ENCODE measurements at regions of chr2 and their contacts with region 1.

Region 1: GRCh38 chr2:204950671-204951346 is 405.5 kb downstream of the PARD3B start:
- DNase-seq: no peak
- H3K4me3 Mint-ChIP-seq: no peak overlapping the region
- H3K27ac Mint-ChIP-seq: no peak overlapping the region
- H3K4me1 Mint-ChIP-seq: peaks cover 57% of the 10 kb centered on the region
- H3K27me3 Mint-ChIP-seq: no peaks in the 10 kb centered on the region

Region 2: GRCh38 chr2:204892506-204893255 is 58.1 kb before region 1 on chr2:
- intact Hi-C with region 1: loop called (anchors 2 kb)
- DNase-seq: peak; percentile 17
- H3K4me3 Mint-ChIP-seq: no peak overlapping the region
- H3K27ac Mint-ChIP-seq: no peak overlapping the region
- H3K4me1 Mint-ChIP-seq: peaks cover 14% of the 10 kb centered on the region
- H3K27me3 Mint-ChIP-seq: no peaks in the 10 kb centered on the region

Region 3: DNA sequence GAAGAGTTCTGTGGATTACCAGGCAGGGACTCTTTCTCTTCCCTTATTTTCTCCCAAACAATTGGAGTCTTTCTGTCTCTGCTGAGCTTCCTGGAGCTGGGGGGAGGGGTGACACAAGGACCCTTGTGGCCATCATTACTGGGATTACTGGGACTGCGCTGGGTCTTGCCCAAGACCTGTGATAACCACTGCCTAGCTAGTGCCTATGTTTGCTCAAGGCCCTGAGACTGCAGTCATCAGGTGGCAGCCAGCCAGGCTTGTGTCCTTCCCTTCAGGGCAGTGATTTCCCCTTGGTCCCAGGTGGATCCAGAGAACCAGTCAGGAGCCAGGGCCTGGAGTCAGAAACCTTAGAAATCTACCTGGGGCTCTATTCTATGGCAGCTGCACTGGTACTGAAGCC is 49.9 kb before region 1 on chr2:
- intact Hi-C with region 1: loop called (anchors 1 kb)
- DNase-seq: no peak
- H3K4me3 Mint-ChIP-seq: no peak overlapping the region
- H3K27ac Mint-ChIP-seq: no peak overlapping the region
- H3K4me1 Mint-ChIP-seq: peaks cover 42% of the 10 kb centered on the region
- H3K27me3 Mint-ChIP-seq: no peaks in the 10 kb centered on the region

Region 4: GRCh38 chr2:204967199-204967960 is 16.6 kb after region 1 on chr2:
- intact Hi-C with region 1: loop called (anchors 2 kb)
- DNase-seq: peak; percentile 72
- H3K4me3 Mint-ChIP-seq: peak overlapping the region; percentile 6
- H3K27ac Mint-ChIP-seq: peak overlapping the region; percentile 81
- H3K4me1 Mint-ChIP-seq: peaks cover 52% of the 10 kb centered on the region
- H3K27me3 Mint-ChIP-seq: no peaks in the 10 kb centered on the region

Region 5: DNA sequence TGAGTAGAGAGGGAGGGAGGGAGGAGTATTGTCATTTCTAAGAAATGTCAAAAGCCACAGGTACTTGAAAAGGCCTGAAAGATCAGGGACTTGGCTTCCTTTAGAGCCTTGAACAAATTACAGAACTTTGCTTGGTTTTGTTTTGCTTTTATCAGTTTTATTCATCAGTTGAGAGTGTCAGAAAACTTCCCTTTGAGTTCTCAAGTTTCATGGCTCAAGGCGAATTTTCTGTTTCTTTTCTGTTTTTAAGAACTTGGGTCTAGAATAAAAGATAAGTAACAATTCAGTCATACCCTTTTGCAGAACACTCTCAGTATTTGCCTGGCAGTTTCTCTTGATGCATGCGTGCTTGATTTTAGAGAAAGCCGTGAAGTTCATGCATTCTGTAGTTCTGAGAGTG is 126.3 kb after region 1 on chr2:
- intact Hi-C with region 1: loop called (anchors 2 kb)
- DNase-seq: peak; percentile 20
- H3K4me3 Mint-ChIP-seq: peak overlapping the region; percentile 39
- H3K27ac Mint-ChIP-seq: peak overlapping the region; percentile 60
- H3K4me1 Mint-ChIP-seq: peaks cover 43% of the 10 kb centered on the region
- H3K27me3 Mint-ChIP-seq: no peaks in the 10 kb centered on the region

Region 6: DNA sequence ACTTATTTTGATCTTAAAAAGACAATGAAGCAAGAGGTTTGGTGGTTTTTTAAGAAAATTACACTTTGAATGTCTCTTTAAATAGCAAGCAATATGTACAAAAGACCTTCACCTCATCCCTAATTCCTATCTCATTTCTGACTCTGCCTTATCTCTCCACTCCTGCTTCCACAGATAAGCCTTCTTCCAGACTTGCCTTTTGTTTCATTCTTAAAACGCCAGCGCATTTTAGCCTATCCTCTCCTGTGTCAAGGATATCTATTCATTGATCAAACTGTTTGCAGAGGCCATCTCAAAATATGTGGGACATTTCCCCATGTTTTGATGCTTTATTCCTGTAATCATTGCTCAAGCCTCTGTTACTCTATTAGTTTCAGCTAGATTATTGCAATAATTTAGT is 157.0 kb after region 1 on chr2:
- intact Hi-C with region 1: no loop called
- DNase-seq: no peak
- H3K4me3 Mint-ChIP-seq: no peak overlapping the region
- H3K27ac Mint-ChIP-seq: no peak overlapping the region
- H3K4me1 Mint-ChIP-seq: peaks cover 6% of the 10 kb centered on the region
- H3K27me3 Mint-ChIP-seq: peaks cover 21% of the 10 kb centered on the region

Region 7: GRCh38 chr2:205612636-205613035 is 661.8 kb after region 1 on chr2:
- intact Hi-C with region 1: loop called (anchors 5 kb)
- DNase-seq: peak; percentile 41
- H3K4me3 Mint-ChIP-seq: peak overlapping the region; percentile 38
- H3K27ac Mint-ChIP-seq: peak overlapping the region; percentile 91
- H3K4me1 Mint-ChIP-seq: peaks cover 60% of the 10 kb centered on the region
- H3K27me3 Mint-ChIP-seq: no peaks in the 10 kb centered on the region

Region 8: DNA sequence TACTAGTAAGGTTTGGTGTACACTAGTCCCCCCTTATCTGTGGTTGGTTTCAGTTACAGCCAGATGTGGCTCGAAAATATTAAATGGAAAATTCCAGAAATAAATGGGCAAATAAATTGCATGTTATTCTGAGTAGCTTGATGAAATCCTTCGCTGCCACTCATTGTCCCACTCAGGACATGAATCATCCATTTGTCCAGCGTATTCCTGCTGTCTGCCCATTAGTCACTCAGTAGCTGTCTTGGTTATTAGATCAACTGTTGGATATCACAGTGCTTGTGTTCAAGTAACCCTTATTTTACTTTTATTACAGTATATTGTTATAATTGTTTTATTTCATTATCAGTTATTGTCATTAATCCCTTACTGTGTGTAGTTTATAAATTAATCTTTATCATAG is 1345.3 kb after region 1 on chr2:
- intact Hi-C with region 1: no loop called
- DNase-seq: no peak
- H3K4me3 Mint-ChIP-seq: no peak overlapping the region
- H3K27ac Mint-ChIP-seq: no peak overlapping the region
- H3K4me1 Mint-ChIP-seq: no peaks in the 10 kb centered on the region
- H3K27me3 Mint-ChIP-seq: no peaks in the 10 kb centered on the region

Measured in activated T-helper 2 cell treated with anti-CD3 and anti-CD28 coated beads, Interferon-gamma antibody, Interleukin-2, Interleukin-4, amounts not matched to agents 10 μg/mL and 5 μg/mL and 100 μg/mL, durations not matched to agents 14 hours and 24 hours and 36 hours (primary cell).